Activated CD4-positive, alpha-beta memory T cell treated with anti-CD3 and anti-CD28 coated beads, Interleukin-2, amount 10 ng/mL, durations not matched to agents 7 days and 5 days (primary cell): ENCODE measurements at regions of chr10 and their contacts with region 1.

Region 1: GRCh38 chr10:84352251-84352842 is 24.0 kb downstream of the CCSER2 start:
- DNase-seq: peak; percentile 65
- H3K4me3 Mint-ChIP-seq: no peak overlapping the region
- H3K27ac Mint-ChIP-seq: no peak overlapping the region
- H3K4me1 Mint-ChIP-seq: peaks cover 38% of the 10 kb centered on the region
- H3K27me3 Mint-ChIP-seq: no peaks in the 10 kb centered on the region

Region 2: GRCh38 chr10:84333864-84334451 is 18.4 kb before region 1 on chr10:
- CTCF ChIA-PET with region 1: interaction called, 16 read pairs
- POLR2A ChIA-PET with region 1: interaction called, 5 read pairs
- DNase-seq: peak; percentile 79
- H3K4me3 Mint-ChIP-seq: peak overlapping the region; percentile 55
- H3K27ac Mint-ChIP-seq: peak overlapping the region; percentile 86
- H3K4me1 Mint-ChIP-seq: peaks cover 50% of the 10 kb centered on the region
- H3K27me3 Mint-ChIP-seq: no peaks in the 10 kb centered on the region

Region 3: DNA sequence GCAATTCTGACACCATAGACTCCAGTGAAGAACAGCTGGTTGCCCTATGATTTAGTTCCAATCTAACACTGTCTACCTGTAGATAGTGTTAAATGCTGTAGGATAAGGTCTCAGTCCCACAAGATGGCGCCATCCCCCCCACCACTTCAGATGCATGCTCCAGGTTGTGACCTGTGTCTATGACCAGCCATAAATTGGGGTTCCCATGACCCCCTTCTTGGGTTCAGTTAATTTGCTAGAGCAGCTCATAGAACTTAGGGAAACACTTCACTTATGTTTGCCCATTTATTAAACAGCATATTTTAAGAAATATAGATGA is 10.8 kb before region 1 on chr10:
- CTCF ChIA-PET with region 1: interaction called, 15 read pairs
- POLR2A ChIA-PET with region 1: interaction called, 4 read pairs
- DNase-seq: no peak
- H3K4me3 Mint-ChIP-seq: no peak overlapping the region
- H3K27ac Mint-ChIP-seq: no peak overlapping the region
- H3K4me1 Mint-ChIP-seq: peaks cover 55% of the 10 kb centered on the region
- H3K27me3 Mint-ChIP-seq: no peaks in the 10 kb centered on the region

Region 4: DNA sequence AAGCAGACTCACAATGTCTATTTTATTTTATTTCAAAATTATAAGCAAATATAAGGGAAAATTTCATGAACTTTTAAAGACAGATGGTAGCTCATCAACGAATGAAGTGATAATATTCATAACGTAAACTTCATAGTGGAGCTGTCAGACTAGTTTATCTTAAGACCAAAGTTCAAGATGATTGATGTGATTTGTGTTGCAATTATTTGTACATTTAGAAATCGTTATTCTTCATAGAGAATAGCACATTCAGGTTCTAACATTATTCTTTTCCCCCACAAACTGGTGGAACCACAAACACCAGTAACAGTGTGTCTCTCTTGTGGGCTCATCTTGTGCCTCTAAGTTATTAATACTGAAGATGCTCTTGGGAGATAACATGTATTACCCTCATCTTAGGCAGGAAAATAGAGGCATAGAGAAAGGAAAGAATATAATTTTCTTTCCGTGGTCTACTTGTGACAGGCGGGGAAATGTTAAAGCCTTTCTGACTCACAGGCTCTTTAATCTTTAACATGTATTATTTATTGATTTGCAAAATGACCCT is 13.1 kb after region 1 on chr10:
- CTCF ChIA-PET with region 1: interaction called, 14 read pairs
- POLR2A ChIA-PET with region 1: no interaction called
- DNase-seq: no peak
- H3K4me3 Mint-ChIP-seq: no peak overlapping the region
- H3K27ac Mint-ChIP-seq: no peak overlapping the region
- H3K4me1 Mint-ChIP-seq: peaks cover 26% of the 10 kb centered on the region
- H3K27me3 Mint-ChIP-seq: no peaks in the 10 kb centered on the region